MCF 10A (cell line): ENCODE measurements at regions of chr3 and their contacts with region 1.

Region 1: DNA sequence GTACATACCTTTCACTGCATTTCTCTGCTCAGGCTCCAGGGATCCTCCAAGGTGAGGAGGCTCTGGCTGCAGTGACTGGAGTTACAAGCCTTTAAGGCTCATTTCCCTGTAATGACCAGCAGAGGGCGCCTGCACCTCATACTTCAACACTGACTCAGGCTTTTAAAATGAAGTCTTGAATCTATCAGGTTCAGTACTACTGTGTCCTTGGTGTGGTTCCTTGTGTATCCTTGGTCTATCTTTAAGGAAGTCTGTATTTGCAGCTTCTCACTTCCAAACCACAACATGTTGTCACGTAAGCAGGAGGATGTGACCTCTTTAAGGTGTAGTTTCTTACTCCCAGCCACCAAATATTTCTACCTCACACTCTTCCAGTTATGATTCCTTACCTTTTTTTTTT is 122.5 kb upstream of the ZBED2 start:
- DNase-seq: peak; percentile 92
- H3K4me3 Mint-ChIP-seq: no peak overlapping the region
- H3K27ac Mint-ChIP-seq: peak overlapping the region; percentile 27
- H3K4me1 Mint-ChIP-seq: peaks cover 20% of the 10 kb centered on the region
- H3K27me3 Mint-ChIP-seq: no peaks in the 10 kb centered on the region
- CTCF ChIP-seq: peak; percentile 82

Region 2: GRCh38 chr3:111539351-111540331 is 178.0 kb before region 1 on chr3:
- CTCF ChIA-PET with region 1: no interaction called
- POLR2A ChIA-PET with region 1: no interaction called
- intact Hi-C with region 1: no loop called
- DNase-seq: peak; percentile 64
- H3K4me3 Mint-ChIP-seq: no peak overlapping the region
- H3K27ac Mint-ChIP-seq: no peak overlapping the region
- H3K4me1 Mint-ChIP-seq: peaks cover 22% of the 10 kb centered on the region
- H3K27me3 Mint-ChIP-seq: no peaks in the 10 kb centered on the region
- CTCF ChIP-seq: peak; percentile 61

Region 3: DNA sequence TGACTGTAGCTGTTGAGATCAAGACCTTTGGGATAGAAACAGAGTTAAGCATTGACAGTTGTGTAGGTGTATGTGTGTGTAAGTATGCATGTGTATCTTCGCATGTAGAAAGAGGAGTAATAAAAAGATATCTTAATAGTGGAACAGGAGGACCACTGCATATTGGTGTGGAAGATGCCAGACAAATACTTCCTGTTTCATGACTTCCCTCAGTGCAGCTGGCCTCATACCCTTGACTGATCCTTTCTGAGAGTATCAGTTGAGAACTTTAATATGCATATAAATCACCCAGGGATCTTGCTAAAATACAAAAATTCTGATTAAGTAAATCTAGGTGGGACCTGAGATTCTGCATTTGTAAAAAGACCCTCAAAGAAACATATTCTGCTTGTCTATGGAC is 113.9 kb before region 1 on chr3:
- CTCF ChIA-PET with region 1: no interaction called
- POLR2A ChIA-PET with region 1: no interaction called
- intact Hi-C with region 1: no loop called
- DNase-seq: no peak
- H3K4me3 Mint-ChIP-seq: no peak overlapping the region
- H3K27ac Mint-ChIP-seq: no peak overlapping the region
- H3K4me1 Mint-ChIP-seq: peaks cover under 1% of the 10 kb centered on the region
- H3K27me3 Mint-ChIP-seq: no peaks in the 10 kb centered on the region
- CTCF ChIP-seq: no peak

Region 4: DNA sequence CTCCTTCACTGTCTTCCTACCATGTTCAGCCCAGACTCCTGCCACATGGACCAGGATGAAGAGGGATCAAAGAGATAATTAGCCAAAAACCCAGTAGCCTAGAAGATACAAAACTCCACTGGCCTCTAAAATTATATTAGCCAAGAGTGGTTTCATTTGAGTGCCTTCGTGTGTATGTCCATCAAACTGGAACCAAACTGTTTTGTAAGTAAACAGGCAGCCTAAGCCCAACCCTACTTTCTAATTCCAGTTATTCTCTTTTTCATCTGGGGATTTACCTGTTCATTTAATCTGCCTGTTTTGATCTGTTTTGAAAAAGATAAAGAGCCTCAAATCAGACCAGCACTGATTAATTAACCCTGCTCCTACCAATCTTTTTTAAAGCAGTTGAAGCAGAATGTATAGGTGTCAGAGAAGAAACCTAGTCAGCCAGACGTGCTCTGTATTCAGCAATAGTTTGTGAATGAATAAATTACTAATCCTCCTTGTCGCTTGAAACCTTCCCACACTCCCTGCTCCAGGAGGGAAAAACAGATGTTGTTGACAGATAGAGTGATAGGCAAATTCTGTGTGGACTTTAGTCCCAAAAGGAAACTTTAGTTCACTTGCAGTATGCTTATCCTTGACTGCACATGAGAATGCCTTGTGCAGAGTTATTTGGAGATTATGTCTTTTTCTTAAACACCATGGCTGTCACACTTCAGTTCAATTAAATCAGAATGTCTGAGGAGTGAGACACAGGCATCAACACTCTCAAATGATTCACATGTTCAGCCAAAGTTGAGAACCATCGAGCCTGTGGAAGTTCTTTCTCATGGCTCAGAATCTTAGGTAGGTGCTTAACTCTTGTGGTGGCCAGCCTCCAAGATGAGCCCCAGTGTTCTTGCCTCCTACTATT is 67.0 kb before region 1 on chr3:
- CTCF ChIA-PET with region 1: no interaction called
- POLR2A ChIA-PET with region 1: no interaction called
- intact Hi-C with region 1: no loop called
- DNase-seq: no peak
- H3K4me3 Mint-ChIP-seq: no peak overlapping the region
- H3K27ac Mint-ChIP-seq: no peak overlapping the region
- H3K4me1 Mint-ChIP-seq: no peaks in the 10 kb centered on the region
- H3K27me3 Mint-ChIP-seq: no peaks in the 10 kb centered on the region
- CTCF ChIP-seq: no peak

Region 5: DNA sequence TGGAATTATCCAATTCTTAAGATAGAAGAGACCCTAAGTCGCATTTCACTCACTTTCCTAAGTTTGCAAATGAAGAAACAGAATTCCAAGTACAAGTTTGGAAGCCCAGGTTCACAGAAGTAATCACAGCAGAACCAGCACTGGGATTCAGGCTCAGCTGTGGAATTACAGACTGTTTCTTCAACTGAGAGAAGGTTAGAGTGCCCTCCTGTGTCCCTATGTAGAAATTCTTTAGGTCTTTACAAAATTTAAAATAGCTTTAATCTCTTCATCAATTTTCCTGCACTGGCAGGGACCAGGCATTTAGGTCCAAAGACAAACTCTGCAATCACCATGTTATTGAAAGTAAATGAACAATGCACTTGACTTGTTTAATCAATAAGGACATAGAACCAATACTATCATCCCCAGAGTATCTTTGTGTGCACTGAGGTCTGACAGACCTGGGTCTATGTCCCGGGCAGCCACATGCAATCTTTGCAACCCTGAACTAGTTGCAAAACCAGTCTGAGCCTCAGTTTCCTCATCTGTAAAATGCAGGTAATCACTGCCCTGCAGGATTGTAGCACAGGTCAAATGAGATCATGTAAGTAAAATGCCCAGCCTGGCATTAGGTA is 26.2 kb before region 1 on chr3:
- CTCF ChIA-PET with region 1: interaction called, 34 read pairs
- POLR2A ChIA-PET with region 1: interaction called, 4 read pairs
- intact Hi-C with region 1: no loop called
- DNase-seq: peak; percentile 51
- H3K4me3 Mint-ChIP-seq: no peak overlapping the region
- H3K27ac Mint-ChIP-seq: no peak overlapping the region
- H3K4me1 Mint-ChIP-seq: peaks cover 6% of the 10 kb centered on the region
- H3K27me3 Mint-ChIP-seq: no peaks in the 10 kb centered on the region
- CTCF ChIP-seq: peak; percentile 55

Region 6: GRCh38 chr3:111761309-111761831 is 43.8 kb after region 1 on chr3:
- CTCF ChIA-PET with region 1: interaction called, 25 read pairs
- POLR2A ChIA-PET with region 1: interaction called, 7 read pairs
- intact Hi-C with region 1: loop called (anchors 5 kb)
- DNase-seq: peak; percentile 73
- H3K4me3 Mint-ChIP-seq: peak overlapping the region; percentile 45
- H3K27ac Mint-ChIP-seq: peak overlapping the region; percentile 96
- H3K4me1 Mint-ChIP-seq: peaks cover 30% of the 10 kb centered on the region
- H3K27me3 Mint-ChIP-seq: no peaks in the 10 kb centered on the region
- CTCF ChIP-seq: no peak

Region 7: DNA sequence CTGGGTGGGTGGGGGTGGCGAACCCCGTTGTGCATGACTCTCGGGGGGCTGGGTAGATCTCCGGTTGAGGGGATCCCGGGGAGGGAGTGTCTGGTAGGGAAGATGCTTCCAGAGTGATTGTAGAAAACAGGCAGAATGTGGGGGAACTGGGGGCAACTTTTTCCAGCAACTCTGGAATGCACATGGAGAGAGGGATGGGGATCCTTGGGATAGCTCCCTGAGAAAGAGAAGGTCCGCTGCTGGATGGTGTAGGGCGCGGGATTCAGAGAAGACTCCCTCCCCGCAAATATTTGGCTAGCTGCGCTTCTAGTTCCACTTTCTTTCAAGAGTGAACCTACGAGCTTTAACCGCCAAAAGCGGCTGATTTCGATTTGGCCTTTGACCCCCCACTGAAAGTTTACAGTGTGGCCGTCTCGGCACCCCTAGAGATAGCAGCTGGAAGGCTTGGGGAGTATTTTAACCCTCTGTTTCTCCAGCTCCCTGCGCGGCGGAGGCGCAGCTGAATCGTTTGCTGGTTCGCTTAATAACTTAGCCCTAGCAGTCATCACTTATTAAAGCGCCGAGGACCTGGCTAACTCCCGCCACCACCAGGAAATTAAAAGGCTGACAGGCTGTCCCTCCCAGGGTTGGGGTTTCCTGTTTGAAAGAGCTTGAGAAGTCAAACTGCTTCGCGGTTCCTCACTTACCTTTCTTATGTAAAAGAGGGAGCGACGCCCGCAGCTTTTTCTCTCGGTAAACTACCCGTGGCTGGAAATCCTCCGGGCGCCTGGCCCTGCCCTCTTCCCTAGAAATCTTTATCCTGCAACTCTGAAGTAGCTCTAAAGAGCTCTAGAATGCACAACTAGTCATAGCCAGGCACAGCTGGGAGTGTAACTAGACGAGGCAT is 142.6 kb after region 1 on chr3:
- CTCF ChIA-PET with region 1: interaction called, 371 read pairs
- POLR2A ChIA-PET with region 1: interaction called, 207 read pairs
- intact Hi-C with region 1: loop called (anchors 1 kb)
- DNase-seq: peak; percentile 93
- H3K4me3 Mint-ChIP-seq: peak overlapping the region; percentile 98
- H3K27ac Mint-ChIP-seq: peak overlapping the region; percentile 94
- H3K4me1 Mint-ChIP-seq: peaks cover 50% of the 10 kb centered on the region
- H3K27me3 Mint-ChIP-seq: no peaks in the 10 kb centered on the region
- CTCF ChIP-seq: peak; percentile 61

Region 8: DNA sequence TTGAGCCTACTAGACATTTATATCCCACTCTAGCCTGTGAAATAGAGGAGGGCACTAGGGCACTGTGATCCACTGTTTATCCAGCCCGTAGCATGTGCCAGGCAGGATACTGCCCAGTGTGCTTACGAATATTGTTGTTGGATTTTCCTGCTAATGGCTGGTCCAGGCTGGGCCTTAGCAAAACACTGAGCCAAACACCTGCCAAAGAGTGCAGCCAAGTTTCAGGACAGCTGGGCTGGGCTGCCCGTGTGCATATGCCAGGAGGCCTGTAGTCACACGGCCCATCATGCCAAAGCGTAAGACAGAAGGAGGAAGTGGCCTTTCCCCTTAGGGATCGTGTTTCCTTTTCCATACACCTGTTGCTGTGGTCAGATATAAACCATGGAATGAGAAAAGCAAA is 206.7 kb after region 1 on chr3:
- CTCF ChIA-PET with region 1: interaction called, 10 read pairs
- POLR2A ChIA-PET with region 1: no interaction called
- intact Hi-C with region 1: no loop called
- DNase-seq: peak; percentile 75
- H3K4me3 Mint-ChIP-seq: peak overlapping the region; percentile 43
- H3K27ac Mint-ChIP-seq: peak overlapping the region; percentile 93
- H3K4me1 Mint-ChIP-seq: peaks cover 28% of the 10 kb centered on the region
- H3K27me3 Mint-ChIP-seq: no peaks in the 10 kb centered on the region
- CTCF ChIP-seq: no peak

Region 9: GRCh38 chr3:112043603-112044201 is 326.1 kb after region 1 on chr3:
- CTCF ChIA-PET with region 1: interaction called, 7 read pairs
- POLR2A ChIA-PET with region 1: interaction called, 3 read pairs
- intact Hi-C with region 1: loop called (anchors 1 kb)
- DNase-seq: peak; percentile 83
- H3K4me3 Mint-ChIP-seq: no peak overlapping the region
- H3K27ac Mint-ChIP-seq: no peak overlapping the region
- H3K4me1 Mint-ChIP-seq: peaks cover 10% of the 10 kb centered on the region
- H3K27me3 Mint-ChIP-seq: no peaks in the 10 kb centered on the region
- CTCF ChIP-seq: peak; percentile 79